Activated CD4-positive, alpha-beta T cell treated with anti-CD3 and anti-CD28 coated beads for 36 hours (primary cell): ENCODE measurements at regions of chr14 and their contacts with region 1.

Region 1: DNA sequence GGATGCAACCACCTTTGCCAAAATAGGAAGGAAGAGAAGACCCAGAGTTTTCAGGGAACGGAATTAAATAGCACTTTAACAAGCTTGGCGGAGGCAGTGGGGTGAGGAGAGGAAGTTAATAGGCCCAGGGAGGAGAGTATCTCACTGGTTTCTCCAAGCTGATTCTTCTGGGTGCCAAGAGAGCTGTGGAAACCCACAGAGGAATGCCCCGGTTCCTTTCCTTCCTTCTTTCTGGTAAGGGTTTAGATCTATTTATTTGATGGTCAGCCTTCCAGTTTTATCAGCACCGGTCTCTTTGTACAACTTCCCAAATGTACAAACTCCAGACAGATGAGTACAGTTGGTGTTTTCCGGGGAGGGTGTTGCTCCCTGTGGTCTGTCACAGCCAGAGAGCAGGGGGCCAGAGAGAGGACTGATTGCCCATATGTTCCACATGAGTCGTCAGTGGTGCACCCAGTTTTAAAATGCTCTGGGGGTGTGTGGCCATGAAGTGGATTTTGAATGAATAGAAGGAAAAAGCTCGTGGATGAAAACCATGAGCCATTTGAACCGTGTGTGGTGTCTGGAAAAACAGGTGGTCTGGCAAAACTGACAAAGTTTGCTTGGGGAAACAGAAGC is 26.6 kb downstream of the PRKCH start:
- DNase-seq: peak; percentile 63
- ATAC-seq: peak; percentile 11
- H3K4me3 Mint-ChIP-seq: peak overlapping the region; percentile 86
- H3K27ac Mint-ChIP-seq: peak overlapping the region; percentile 99
- H3K4me1 Mint-ChIP-seq: peaks cover 98% of the 10 kb centered on the region
- H3K27me3 Mint-ChIP-seq: no peaks in the 10 kb centered on the region

Region 2: DNA sequence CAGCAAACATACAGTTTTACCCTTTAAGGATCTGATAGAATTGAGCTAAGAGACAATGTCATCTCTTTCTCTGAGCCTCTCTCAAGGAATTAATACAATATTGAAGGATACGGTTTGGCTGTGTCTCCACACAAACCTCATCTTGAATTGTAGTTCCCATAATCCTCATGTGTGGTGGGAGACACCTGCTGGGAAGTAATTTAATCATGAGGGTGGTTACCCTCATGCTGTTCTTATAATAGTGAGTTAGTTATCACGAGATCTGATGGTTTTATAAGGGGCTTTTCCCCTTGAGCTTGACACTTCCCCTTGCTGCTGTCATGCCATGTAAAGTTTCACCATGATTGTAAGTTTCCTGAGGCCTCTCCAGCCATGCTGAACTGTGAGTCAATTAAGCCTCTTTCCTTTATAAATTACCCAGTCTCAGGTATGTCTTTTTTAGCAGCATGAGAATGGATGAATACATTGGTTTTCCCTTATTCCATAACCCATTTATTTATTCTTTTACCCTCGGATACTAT is 114.4 kb before region 1 on chr14:
- CTCF ChIA-PET with region 1: no interaction called
- POLR2A ChIA-PET with region 1: no interaction called
- intact Hi-C with region 1: no loop called
- DNase-seq: no peak
- ATAC-seq: no peak
- H3K4me3 Mint-ChIP-seq: no peak overlapping the region
- H3K27ac Mint-ChIP-seq: no peak overlapping the region
- H3K4me1 Mint-ChIP-seq: peaks cover 6% of the 10 kb centered on the region
- H3K27me3 Mint-ChIP-seq: peaks cover 16% of the 10 kb centered on the region

Region 3: GRCh38 chr14:61326847-61327246 is 21.1 kb before region 1 on chr14:
- CTCF ChIA-PET with region 1: interaction called, 6 read pairs
- POLR2A ChIA-PET with region 1: interaction called, 24 read pairs
- intact Hi-C with region 1: loop called in 1 of 2 experiments (anchors 1 kb)
- DNase-seq: no peak
- ATAC-seq: no peak
- H3K4me3 Mint-ChIP-seq: peak overlapping the region; percentile 92
- H3K27ac Mint-ChIP-seq: peak overlapping the region; percentile 94
- H3K4me1 Mint-ChIP-seq: peaks cover 71% of the 10 kb centered on the region
- H3K27me3 Mint-ChIP-seq: no peaks in the 10 kb centered on the region

Region 4: DNA sequence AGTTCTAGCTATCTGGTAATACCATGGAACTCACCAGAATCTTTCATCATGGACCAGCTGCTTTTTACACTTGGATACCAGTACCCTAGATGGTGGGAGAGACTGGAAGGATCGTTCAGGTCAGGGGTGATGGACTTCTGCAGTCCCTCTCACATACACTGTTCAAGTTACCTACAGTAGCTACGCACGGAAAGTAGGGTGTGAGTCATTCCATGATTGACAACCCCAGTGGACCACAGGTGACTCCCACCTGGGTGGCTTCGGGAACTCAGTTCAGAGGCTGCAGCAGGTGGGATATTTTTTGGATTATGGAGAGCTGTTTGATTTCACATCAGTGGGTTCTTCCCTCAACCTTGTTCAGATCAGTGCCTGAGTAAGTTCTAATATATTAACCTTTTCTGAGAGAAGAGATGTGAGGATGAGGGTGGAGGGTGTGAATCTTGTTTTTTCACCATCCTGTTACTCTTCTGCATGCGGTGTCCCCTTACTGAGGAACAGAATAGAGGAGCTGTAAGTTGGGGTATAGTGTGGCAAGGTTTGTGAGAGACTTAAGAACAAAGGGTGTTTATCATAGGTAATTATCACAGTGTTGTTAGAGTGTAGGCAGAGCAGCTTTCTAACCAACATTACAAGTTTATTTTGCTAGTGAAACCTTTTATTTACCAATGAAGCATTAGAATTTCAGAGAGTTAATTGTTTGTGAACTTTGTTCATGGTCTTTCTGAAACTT is 13.0 kb after region 1 on chr14:
- CTCF ChIA-PET with region 1: interaction called, 12 read pairs
- POLR2A ChIA-PET with region 1: interaction called, 6 read pairs
- intact Hi-C with region 1: loop called in 1 of 2 experiments (anchors 1 kb)
- DNase-seq: peak; percentile 46
- ATAC-seq: peak; percentile 26
- H3K4me3 Mint-ChIP-seq: no peak overlapping the region
- H3K27ac Mint-ChIP-seq: peak overlapping the region; percentile 52
- H3K4me1 Mint-ChIP-seq: peaks cover 54% of the 10 kb centered on the region
- H3K27me3 Mint-ChIP-seq: no peaks in the 10 kb centered on the region

Region 5: DNA sequence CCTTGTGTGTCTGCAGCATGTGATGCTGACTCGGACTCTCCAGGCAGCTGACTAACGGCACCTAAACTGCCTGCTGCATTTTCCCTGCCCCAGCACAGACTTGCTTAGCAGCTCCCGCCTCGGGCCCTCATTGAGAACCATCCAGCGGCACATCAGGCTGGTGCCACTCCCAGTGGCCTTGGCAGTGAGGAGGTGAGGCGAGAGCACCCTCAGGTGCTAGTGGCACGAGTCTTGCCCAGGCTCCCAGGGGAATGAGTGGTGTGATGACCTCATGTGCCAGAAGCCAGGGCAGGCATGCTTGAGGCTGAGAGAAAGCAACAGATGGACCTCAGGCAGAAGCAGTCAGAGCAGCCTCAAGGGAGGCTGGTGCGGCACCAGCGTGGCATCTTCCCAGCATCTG is 33.6 kb after region 1 on chr14:
- CTCF ChIA-PET with region 1: interaction called, 11 read pairs
- POLR2A ChIA-PET with region 1: no interaction called
- intact Hi-C with region 1: no loop called
- DNase-seq: peak; percentile 38
- ATAC-seq: no peak
- H3K4me3 Mint-ChIP-seq: no peak overlapping the region
- H3K27ac Mint-ChIP-seq: peak overlapping the region; percentile 70
- H3K4me1 Mint-ChIP-seq: no peaks in the 10 kb centered on the region
- H3K27me3 Mint-ChIP-seq: no peaks in the 10 kb centered on the region

Region 6: GRCh38 chr14:61403411-61403810 is 55.5 kb after region 1 on chr14:
- CTCF ChIA-PET with region 1: interaction called, 3 read pairs
- POLR2A ChIA-PET with region 1: interaction called, 3 read pairs
- intact Hi-C with region 1: loop called in 1 of 2 experiments (anchors 2 kb)
- DNase-seq: no peak
- ATAC-seq: peak; percentile 67
- H3K4me3 Mint-ChIP-seq: peak overlapping the region; percentile 48
- H3K27ac Mint-ChIP-seq: peak overlapping the region; percentile 86
- H3K4me1 Mint-ChIP-seq: peaks cover 86% of the 10 kb centered on the region
- H3K27me3 Mint-ChIP-seq: no peaks in the 10 kb centered on the region

Region 7: DNA sequence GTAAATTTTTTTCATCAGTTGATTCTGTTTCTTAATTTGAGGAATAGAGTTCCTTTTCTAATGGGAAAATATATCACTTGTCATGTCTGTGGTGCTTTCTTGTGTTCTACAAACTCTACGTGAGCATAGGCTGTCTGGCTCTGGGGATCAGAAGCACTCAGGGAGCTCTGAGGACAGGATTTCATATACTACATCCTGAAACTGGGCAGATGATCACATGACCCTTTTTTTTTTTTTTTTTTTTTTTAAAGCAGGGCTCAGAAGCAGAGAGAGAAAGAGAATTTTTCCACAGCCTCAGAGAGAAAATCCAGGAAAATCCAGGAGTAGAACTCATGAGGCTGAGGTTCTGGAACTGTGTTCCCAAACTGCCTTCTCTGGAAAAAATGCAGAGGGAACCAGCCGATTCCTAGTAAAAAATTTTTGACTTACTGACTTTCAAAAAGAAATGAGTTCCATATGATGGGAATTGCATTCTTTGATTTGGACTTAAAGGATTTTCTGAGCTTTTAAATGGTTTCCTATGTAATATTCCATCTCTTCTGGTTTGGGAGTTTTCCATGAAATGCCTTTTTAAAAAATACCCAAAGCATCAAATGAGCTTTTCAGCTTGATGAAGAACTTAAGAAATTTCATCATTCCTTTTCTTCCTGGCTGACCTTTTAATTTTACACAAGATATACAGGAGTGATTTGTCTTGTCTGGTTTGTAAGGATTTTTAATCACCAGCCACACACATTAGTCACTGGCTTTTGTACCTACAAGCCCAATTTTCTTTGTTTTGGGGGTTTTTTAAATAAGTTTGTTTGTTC is 164.3 kb after region 1 on chr14:
- CTCF ChIA-PET with region 1: no interaction called
- POLR2A ChIA-PET with region 1: no interaction called
- intact Hi-C with region 1: loop called in 1 of 2 experiments (anchors 1 kb)
- DNase-seq: peak; percentile 44
- ATAC-seq: peak; percentile 59
- H3K4me3 Mint-ChIP-seq: peak overlapping the region; percentile 54
- H3K27ac Mint-ChIP-seq: peak overlapping the region; percentile 97
- H3K4me1 Mint-ChIP-seq: peaks cover 94% of the 10 kb centered on the region
- H3K27me3 Mint-ChIP-seq: no peaks in the 10 kb centered on the region